ENCODE measurements at regions of chr1 and their contacts with region 1.

Region 1: DNA sequence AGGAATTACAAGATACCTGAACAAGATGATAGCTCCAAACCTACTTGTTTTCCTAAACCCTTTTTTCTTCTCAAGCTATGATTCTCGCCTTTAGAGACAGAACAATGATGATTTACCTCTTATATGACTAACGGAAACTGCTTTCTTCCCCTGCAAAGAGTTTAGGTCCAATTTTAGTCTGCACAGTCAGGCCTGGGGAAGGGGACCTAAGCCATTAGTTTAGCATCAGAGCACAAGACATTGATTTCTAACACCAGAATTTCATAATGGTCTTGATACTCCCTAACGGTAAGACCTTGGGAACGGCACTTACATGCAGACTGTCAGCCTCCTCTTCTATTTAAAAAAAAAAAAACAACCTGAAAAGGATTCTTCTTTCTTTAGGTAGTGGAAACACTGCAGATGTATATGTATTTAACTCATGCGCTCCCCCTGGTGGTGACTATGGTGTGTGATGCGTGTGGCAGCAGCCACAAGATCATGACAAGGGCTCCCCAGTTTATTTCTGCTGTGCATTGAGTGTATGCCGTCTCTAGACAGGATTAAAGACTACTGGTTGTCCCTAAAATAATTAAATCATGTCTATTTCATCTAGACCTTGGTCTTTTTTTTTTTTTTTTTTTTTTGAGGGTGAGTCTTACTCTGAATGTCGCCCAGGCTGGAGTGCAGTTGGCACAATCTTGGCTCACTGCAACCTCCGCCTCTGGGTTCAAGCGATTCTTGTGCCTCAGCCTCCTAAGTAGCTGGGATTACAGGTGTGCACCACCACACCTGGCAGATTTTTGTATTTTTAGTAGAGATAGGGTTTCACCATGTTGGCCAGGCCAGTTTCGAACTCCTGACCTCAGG is 37.3 kb upstream of the TMEM222 start:
- DNase-seq: peak; percentile 28
- ATAC-seq: peak; percentile 98
- H3K4me3 ChIP-seq: no peak overlapping the region
- H3K27ac ChIP-seq: no peak overlapping the region
- H3K4me1 ChIP-seq: no peaks in the 10 kb centered on the region
- H3K27me3 ChIP-seq: no peaks in the 10 kb centered on the region
- CTCF ChIP-seq: peak; percentile 79 to 84 (median 82)
- EP300 ChIP-seq: no peak
- POLR2A ChIP-seq: no peak
- RAD21 ChIP-seq: peak; percentile 84

Region 2: DNA sequence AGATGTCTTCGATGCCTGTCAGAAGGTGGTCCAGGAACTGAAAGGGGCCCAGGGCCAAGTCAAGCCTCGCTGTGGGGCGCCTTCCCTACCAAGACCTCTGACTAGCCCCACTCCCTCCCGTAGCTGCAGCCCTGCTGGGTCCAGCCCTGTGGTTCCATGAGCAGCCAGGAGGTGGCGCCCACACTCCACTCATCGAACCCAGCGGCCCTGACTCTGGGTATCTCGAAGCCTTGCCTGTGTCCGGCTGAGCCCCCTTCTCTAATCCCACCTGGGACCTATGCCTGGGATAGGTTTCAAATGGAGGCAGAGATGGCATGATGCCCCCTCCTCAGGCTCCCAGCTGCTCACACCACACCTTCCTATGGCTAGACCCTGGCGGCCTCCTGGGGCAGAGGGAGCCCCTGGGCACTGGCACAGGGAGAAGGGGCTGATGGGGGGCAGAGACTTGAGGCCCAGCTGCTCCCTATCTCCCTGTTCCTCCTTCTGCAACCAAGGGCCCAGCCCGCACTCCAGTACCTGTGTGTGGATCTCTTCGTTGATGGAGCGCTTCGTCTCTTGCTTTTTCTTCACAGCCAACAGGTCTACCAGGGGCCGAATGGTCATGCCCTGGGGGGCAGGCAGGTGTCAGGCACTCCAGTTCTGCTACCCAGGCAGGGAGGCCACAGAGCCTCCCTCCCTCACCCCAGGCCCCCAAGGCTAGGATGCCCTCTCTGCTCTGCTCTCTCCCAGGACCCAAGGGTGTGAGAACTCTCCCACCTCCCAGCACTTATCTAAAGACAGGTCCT is 181.8 kb before region 1 on chr1:
- CTCF ChIA-PET with region 1: interaction called, 150 read pairs
- POLR2A ChIA-PET with region 1: interaction called, 3 read pairs
- RAD21 ChIA-PET with region 1: interaction called, 54 read pairs
- SMC1A ChIA-PET with region 1: interaction called, 10 read pairs
- in situ Hi-C with region 1: loop called (anchors 5 kb)
- intact Hi-C with region 1: loop called (anchors 1 kb)
- DNase-seq: no peak
- ATAC-seq: peak; percentile 73
- H3K4me3 ChIP-seq: no peak overlapping the region
- H3K27ac ChIP-seq: no peak overlapping the region
- H3K4me1 ChIP-seq: peaks cover 24% of the 10 kb centered on the region
- H3K27me3 ChIP-seq: no peaks in the 10 kb centered on the region
- CTCF ChIP-seq: peak; percentile 95 to 98 (median 97)
- EP300 ChIP-seq: no peak
- POLR2A ChIP-seq: no peak
- RAD21 ChIP-seq: peak; percentile 95

Region 3: DNA sequence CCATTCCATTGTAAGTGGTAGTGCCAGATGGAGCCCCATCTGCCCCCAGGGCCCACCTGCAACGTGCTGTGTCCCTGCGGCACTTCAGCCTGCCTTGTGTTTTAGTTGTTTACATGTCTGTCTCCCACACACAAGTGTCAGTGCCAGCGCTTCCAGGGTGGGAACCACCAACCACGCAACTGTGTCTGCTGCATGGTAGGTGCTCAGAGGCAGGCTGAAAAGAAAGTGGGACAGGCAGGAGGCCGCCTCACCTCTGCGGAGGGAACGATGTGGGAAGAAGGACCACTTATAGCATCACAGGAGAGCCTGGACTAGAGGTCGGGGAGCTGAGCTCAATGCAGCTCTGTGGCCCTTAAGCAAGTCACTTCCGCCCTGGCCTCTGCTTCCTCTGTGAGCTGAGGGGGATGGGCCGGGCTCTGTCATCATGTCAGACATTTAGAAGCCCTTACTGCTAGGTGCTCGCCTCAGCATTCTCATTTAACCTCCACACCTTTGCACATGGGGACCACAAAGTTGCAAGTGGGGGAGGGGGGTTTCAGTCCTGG is 147.6 kb before region 1 on chr1:
- CTCF ChIA-PET with region 1: interaction called, 11 read pairs
- POLR2A ChIA-PET with region 1: no interaction called
- RAD21 ChIA-PET with region 1: interaction called, 4 read pairs
- SMC1A ChIA-PET with region 1: interaction called, 3 read pairs
- in situ Hi-C with region 1: no loop called
- intact Hi-C with region 1: no loop called
- DNase-seq: no peak
- ATAC-seq: peak; percentile 21
- H3K4me3 ChIP-seq: peak overlapping the region; percentile 17; the same call in 1 of the 2 replicates
- H3K27ac ChIP-seq: peak overlapping the region; percentile 83
- H3K4me1 ChIP-seq: peaks cover 52% of the 10 kb centered on the region
- H3K27me3 ChIP-seq: no peaks in the 10 kb centered on the region
- CTCF ChIP-seq: no peak
- EP300 ChIP-seq: no peak
- POLR2A ChIP-seq: peak; percentile 84
- RAD21 ChIP-seq: no peak

Region 4: GRCh38 chr1:27201295-27201694 is 83.4 kb before region 1 on chr1:
- CTCF ChIA-PET with region 1: interaction called, 108 read pairs
- POLR2A ChIA-PET with region 1: interaction called, 3 read pairs
- RAD21 ChIA-PET with region 1: interaction called, 25 read pairs
- SMC1A ChIA-PET with region 1: interaction called, 66 read pairs
- in situ Hi-C with region 1: loop called (anchors 5 kb)
- intact Hi-C with region 1: loop called (anchors 1 kb)
- DNase-seq: no peak
- ATAC-seq: no peak
- H3K4me3 ChIP-seq: no peak overlapping the region
- H3K27ac ChIP-seq: no peak overlapping the region
- H3K4me1 ChIP-seq: no peaks in the 10 kb centered on the region
- H3K27me3 ChIP-seq: no peaks in the 10 kb centered on the region
- CTCF ChIP-seq: no peak
- EP300 ChIP-seq: no peak
- POLR2A ChIP-seq: no peak
- RAD21 ChIP-seq: no peak

Region 5: DNA sequence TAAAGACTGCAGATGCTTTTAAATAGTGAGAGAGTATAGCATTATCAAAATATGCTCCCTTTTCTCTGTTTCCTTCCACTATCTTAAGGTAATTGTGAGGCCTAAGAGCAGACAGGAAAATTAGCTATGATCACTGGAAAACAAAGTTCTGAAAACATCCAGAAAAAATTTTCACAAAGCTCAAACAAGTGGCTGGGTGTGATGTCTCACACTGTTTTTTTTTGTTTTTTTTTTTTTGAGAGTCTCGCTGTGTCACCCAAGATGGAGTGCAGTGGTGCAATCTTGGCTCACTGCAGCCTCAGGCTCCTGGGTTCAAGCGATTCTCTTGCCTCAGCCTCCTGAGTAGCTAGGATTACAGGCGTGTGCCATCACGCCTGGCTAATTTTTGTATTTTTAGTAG is 43.0 kb before region 1 on chr1:
- CTCF ChIA-PET with region 1: interaction called, 8 read pairs
- POLR2A ChIA-PET with region 1: no interaction called
- RAD21 ChIA-PET with region 1: no interaction called
- SMC1A ChIA-PET with region 1: interaction called, 14 read pairs
- in situ Hi-C with region 1: no loop called
- intact Hi-C with region 1: no loop called
- DNase-seq: no peak
- ATAC-seq: no peak
- H3K4me3 ChIP-seq: no peak overlapping the region
- H3K27ac ChIP-seq: no peak overlapping the region
- H3K4me1 ChIP-seq: peaks cover 5% of the 10 kb centered on the region
- H3K27me3 ChIP-seq: no peaks in the 10 kb centered on the region
- CTCF ChIP-seq: no peak
- EP300 ChIP-seq: no peak
- POLR2A ChIP-seq: no peak
- RAD21 ChIP-seq: no peak

Region 6: DNA sequence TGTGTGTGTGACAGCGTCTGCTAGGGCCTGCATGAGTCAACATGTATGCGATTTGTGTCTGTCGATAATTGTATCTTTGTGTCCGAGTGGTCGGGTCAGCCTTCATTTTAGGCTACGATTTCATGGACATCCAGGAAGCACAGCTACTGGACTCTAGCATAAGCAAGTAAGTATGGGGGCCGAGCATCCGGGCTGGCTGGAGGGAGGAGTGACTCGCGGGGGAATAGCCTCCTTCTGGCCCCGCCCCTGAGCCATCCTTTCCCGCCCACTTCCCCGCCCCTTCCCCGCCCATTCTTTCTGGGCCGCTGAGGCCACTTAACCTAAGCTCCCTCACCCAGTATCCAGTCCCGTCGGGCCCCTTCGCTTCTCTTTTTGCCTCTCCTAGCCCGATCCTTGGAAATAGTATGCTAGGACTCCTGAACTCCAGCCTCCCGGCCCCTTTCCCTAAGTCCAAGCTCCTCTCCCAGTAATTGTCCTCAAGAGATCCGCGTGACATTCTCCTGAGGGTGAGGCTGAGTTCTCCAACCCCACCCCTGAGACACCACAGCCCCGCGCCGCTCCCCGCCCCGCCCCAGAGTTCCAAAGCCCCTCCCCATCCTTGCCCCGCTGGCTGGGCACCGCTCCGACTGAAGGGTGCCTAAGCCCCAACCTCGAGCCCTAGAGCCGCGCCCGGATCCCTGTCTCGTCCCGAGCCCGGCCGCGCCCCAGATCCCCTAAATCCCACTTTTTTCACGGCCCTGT is 80.9 kb after region 1 on chr1:
- CTCF ChIA-PET with region 1: no interaction called
- POLR2A ChIA-PET with region 1: no interaction called
- RAD21 ChIA-PET with region 1: no interaction called
- SMC1A ChIA-PET with region 1: no interaction called
- in situ Hi-C with region 1: no loop called
- intact Hi-C with region 1: no loop called
- DNase-seq: no peak
- ATAC-seq: peak; percentile 83
- H3K4me3 ChIP-seq: peak overlapping the region; percentile 76
- H3K27ac ChIP-seq: no peak overlapping the region
- H3K4me1 ChIP-seq: peaks cover 15% of the 10 kb centered on the region
- H3K27me3 ChIP-seq: no peaks in the 10 kb centered on the region
- CTCF ChIP-seq: no peak
- EP300 ChIP-seq: 0 out of 4 replicates have a peak, but pooled peaks of 1 of the 2 experiments have one; percentile 18
- POLR2A ChIP-seq: peak; percentile 50
- RAD21 ChIP-seq: no peak

Region 7: GRCh38 chr1:27436204-27437159 is 151.8 kb after region 1 on chr1:
- CTCF ChIA-PET with region 1: no interaction called
- POLR2A ChIA-PET with region 1: no interaction called
- RAD21 ChIA-PET with region 1: no interaction called
- SMC1A ChIA-PET with region 1: no interaction called
- in situ Hi-C with region 1: no loop called
- intact Hi-C with region 1: no loop called
- DNase-seq: no peak
- ATAC-seq: peak; percentile 75
- H3K4me3 ChIP-seq: peak overlapping the region; percentile 48
- H3K27ac ChIP-seq: peak overlapping the region; percentile 82
- H3K4me1 ChIP-seq: peaks cover 71% of the 10 kb centered on the region
- H3K27me3 ChIP-seq: no peaks in the 10 kb centered on the region
- CTCF ChIP-seq: no peak
- EP300 ChIP-seq: no peak
- POLR2A ChIP-seq: no peak
- RAD21 ChIP-seq: no peak